ENCODE measurements at regions of chr1 and their contacts with region 1.

Region 1: GRCh38 chr1:23403735-23404486 is 20.6 kb downstream of the TCEA3 start:
- DNase-seq: peak; percentile 90
- ATAC-seq: peak; percentile 86
- H3K4me3 Mint-ChIP-seq: no peak overlapping the region
- H3K27ac Mint-ChIP-seq: no peak overlapping the region
- H3K4me1 Mint-ChIP-seq: peaks cover 16% of the 10 kb centered on the region
- H3K27me3 Mint-ChIP-seq: no peaks in the 10 kb centered on the region

Region 2: GRCh38 chr1:22641906-22642636 is 761.8 kb before region 1 on chr1:
- CTCF ChIA-PET with region 1: no interaction called
- DNase-seq: peak; percentile 71
- ATAC-seq: peak; percentile 83
- H3K4me3 Mint-ChIP-seq: no peak overlapping the region
- H3K27ac Mint-ChIP-seq: no peak overlapping the region
- H3K4me1 Mint-ChIP-seq: no peaks in the 10 kb centered on the region
- H3K27me3 Mint-ChIP-seq: peaks cover 12% of the 10 kb centered on the region

Region 3: DNA sequence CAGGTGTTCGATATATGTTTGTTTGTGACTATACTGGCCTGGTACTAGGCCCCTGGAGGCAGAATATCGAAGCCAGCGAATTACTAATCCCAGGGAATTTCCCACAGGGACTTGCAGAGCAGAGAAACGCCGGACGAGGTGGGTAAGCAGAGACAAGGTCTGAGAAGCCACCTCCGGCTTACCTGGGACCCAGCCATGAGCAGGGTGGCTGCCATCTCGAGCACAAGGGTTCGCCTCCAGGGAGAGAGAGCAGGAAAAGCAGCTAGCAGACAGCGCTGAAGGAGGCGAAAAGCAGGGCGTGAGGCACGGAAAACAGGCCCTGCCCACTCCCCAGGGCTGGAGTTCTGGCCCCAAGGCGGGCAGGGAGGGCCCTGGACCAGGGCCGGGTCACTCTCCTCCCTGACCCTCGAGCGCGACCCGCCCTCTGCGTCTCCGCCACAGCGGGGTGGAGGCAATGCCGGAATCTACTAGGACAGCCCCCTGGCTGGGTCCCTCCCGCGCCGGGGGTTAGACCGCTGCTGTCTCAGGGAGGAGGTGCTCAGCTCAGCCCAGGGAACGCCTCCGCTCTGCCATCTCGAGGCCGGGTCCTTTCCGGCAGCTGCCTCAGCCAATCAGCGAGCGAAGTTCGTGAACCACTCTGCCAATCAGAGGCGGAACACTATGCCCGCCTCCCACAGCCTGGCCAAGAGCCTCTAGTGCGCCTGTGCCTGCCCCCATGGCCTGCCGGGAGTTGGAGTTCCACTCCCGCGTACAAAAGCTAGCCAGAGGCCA is 35.9 kb before region 1 on chr1:
- CTCF ChIA-PET with region 1: interaction called, 11 read pairs
- DNase-seq: peak; percentile 99
- ATAC-seq: peak; percentile 93
- H3K4me3 Mint-ChIP-seq: peak overlapping the region; percentile 91
- H3K27ac Mint-ChIP-seq: peak overlapping the region; percentile 98
- H3K4me1 Mint-ChIP-seq: peaks cover 30% of the 10 kb centered on the region
- H3K27me3 Mint-ChIP-seq: no peaks in the 10 kb centered on the region

Region 4: DNA sequence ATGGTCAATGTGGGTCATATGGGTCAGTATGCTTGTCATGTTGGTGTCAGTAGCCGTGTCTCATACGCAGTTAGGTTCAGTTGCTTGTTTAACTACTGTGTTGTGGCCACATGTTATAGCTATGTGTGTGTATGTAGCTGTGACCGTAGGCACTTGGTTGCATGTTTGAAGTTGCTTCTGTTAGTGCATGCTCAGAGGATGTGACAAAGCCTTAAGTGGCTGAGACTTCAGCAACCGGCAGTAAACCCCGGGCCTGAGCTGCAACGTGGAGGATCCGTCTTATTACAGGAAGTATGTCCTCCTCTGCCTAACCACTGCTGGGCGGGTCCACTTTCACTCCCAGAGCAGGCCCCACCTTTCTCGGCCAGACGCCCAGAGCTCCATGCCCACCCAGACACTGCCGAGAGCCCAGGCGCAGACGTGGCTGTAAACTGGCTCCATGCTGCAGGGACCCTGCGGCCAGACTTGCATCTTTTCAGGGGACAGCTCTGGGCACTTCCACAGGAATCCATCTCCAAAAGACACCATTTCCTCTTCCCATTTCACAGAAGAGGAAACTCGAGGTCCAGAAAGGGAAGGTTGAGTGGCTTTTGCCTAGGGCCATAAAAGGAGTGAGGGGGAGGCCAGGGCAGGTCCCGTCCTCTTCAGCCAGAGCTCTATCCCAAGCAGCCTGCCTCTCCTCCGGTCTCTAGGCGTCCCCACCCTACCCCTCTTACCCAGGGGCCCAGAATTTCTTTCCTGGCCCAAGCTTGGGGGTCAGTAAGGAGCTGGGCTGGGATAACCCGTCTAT is 18.5 kb after region 1 on chr1:
- CTCF ChIA-PET with region 1: interaction called, 13 read pairs
- DNase-seq: peak; percentile 81
- ATAC-seq: peak; percentile 87
- H3K4me3 Mint-ChIP-seq: no peak overlapping the region
- H3K27ac Mint-ChIP-seq: peak overlapping the region; percentile 0
- H3K4me1 Mint-ChIP-seq: peaks cover 21% of the 10 kb centered on the region
- H3K27me3 Mint-ChIP-seq: peaks cover 44% of the 10 kb centered on the region

Region 5: DNA sequence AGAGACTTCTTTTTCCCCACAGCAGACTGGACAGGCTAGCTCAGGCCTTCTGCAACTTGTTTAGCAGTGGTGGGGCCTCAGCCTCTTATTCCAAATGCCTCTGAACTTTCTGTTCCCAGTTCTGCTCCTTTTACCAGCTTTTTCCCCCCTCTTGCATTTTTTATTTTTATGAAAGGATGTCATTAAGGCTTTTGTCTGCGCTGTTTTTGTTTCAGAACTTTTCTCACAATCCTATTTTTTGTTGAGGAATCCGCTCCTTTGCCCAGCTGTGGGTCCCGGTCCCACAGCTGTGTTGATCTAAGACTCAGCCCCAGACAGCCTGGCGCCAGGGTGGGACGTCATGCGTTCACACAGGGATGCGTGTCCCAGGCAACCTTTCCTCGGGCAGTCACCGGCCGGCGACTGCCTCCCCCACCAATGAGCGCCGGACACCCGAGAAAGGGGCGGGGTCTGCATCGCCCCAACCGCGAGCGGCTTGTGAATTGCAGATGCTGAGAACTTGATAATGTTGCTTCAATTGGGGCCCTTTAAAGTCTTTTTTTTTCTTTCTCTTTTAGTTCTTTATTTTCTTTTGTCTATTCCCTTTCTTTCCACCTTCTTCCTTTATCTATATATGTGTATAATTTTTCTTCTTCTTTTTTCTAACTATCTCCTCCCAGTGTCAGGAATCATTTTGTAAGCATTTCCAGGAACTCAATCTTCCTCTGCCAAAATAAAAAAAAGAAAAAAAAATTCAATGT is 158.4 kb after region 1 on chr1:
- CTCF ChIA-PET with region 1: no interaction called
- DNase-seq: no peak
- ATAC-seq: no peak
- H3K4me3 Mint-ChIP-seq: no peak overlapping the region
- H3K27ac Mint-ChIP-seq: no peak overlapping the region
- H3K4me1 Mint-ChIP-seq: peaks cover 27% of the 10 kb centered on the region
- H3K27me3 Mint-ChIP-seq: peaks cover 63% of the 10 kb centered on the region

Measured in activated CD8-positive, alpha-beta memory T cell treated with anti-CD3 and anti-CD28 coated beads, Interleukin-2, amount 10 ng/mL, durations not matched to agents 7 days and 5 days (primary cell).